ENCODE measurements at regions of chr15 and their contacts with region 1.

Region 1: DNA sequence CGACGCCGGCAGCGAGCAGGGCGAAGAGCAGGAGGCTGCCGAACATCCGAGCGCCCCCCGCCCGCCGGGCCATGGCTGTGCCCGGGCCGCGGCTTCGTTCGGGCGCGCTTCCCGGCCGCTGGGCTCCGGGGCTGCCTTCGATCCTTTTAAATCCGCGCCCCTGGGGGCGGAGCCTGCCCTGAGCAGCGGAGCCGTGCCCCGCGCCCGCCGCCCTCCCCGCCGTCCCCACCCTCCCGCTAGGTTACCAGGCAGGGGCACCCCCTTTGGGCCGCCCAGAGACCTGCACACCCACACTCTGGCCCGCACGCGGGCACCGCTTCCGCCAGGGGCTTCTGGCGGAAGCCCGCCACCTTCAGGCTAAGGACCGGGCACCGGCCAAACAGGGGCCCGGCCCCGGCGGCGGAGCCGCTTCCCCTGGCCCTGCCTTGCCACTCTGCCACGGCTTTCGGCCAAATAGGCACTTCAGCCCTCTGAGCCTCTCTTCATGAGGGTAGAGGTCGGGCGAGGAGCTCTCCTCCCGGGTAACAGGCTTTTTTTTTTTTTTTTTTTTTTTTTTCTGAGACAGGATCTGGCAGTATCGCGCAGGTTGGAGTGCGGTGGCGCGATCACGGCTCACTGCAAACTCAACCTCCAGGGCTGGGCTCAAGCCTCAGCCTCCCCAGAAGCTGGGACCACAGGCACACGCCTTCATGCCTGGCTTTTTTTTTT is at the start of gene NMB:
- DNase-seq: peak; percentile 76 to 88 (median 87)
- ATAC-seq: peak; percentile 82
- H3K4me3 ChIP-seq: peak within 1 kb of the TSS; percentile 73
- H3K4me3 Mint-ChIP-seq: peak within 1 kb of the TSS; percentile 78 to 86 (median 83)
- H3K27ac ChIP-seq: peak within 1 kb of the TSS; percentile 76
- H3K27ac Mint-ChIP-seq: peak within 1 kb of the TSS; percentile 74 to 93 (median 84)
- H3K4me1 ChIP-seq: peaks cover 13 to 27% of the 10 kb centered on the region in 2 donors
- H3K4me1 Mint-ChIP-seq: peaks cover 13 to 47% (median 39%) of the 10 kb centered on the region in 7 donors
- H3K27me3 ChIP-seq: no peaks in the 10 kb centered on the region
- H3K27me3 Mint-ChIP-seq: no peaks in the 10 kb centered on the region
- total RNA-seq, gene NMB: 1.2 to 3.1 (median 2.9) TPM

Region 2: DNA sequence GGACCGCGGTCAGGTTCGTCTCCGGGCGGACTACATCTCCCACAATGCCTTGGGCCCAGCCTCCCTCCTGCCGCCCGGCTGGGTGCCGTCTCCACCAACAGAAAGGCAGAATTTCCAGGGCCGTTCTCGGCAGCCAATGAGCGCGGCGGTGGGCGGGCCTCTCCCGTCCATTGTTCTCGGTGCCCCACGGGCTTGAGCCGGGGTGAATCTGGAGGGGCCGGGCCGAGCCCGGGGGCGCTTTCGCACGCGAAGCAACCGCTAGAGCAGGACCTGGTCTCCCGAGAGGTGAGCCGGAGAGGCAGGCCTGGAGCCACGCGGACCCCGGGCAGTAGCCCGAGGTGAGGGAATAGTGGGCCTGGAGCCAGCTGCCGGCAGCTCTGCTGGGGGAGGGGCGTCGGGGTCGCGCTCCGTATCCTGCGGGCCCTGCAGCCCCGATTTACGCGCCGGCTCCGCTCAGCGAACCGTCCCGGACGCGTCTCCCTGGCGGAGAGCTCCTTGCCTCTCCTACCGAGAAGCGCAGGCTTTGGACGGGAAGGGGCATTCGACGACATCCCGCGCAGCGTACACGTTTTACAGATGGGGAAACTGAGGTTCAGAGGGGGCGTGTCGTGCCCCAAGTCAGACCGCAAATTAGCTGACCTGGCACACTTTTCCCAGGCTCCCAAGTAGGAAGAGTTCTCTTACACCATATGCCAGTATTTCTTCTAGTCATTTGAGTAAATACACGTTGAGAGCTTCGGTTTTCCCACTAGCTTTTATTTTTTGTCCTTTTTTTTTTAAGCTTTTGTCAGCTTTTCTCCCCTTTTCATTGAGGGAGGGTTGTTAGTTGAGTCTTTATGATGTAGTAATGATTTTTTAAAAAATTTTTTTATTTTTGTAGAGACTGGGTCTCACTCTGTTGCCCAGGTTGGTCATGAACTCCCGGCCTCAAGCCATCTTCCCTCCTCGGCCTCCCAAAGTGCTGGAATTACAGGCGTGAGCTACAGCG is 57.1 kb before region 1 on chr15 and contains the start of gene ZSCAN2:
- CTCF ChIA-PET with region 1: interaction called, 7 read pairs
- POLR2A ChIA-PET with region 1: interaction called, 32 read pairs
- intact Hi-C with region 1: loop called (anchors 1 kb)
- DNase-seq: peak; percentile 83 to 93 (median 90)
- ATAC-seq: peak; percentile 98
- H3K4me3 ChIP-seq: peak within 1 kb of the TSS; percentile 96
- H3K4me3 Mint-ChIP-seq: peak within 1 kb of the TSS; percentile 89 to 99 (median 96)
- H3K27ac ChIP-seq: peak within 1 kb of the TSS; percentile 77
- H3K27ac Mint-ChIP-seq: peak within 1 kb of the TSS; percentile 67 to 97 (median 88)
- H3K4me1 ChIP-seq: peaks cover 29 to 36% of the 10 kb centered on the region in 2 donors
- H3K4me1 Mint-ChIP-seq: peaks cover 53 to 89% (median 71%) of the 10 kb centered on the region in 7 donors
- H3K27me3 ChIP-seq: no peaks in the 10 kb centered on the region
- H3K27me3 Mint-ChIP-seq: no peaks in the 10 kb centered on the region
- total RNA-seq, gene ZSCAN2: 4.8 to 13.0 (median 6.8) TPM

Region 3: GRCh38 chr15:84633311-84634227 is 24.7 kb before region 1 on chr15:
- CTCF ChIA-PET with region 1: interaction called, 8 read pairs
- POLR2A ChIA-PET with region 1: interaction called, 41 read pairs
- intact Hi-C with region 1: loop called (anchors 1 kb)
- DNase-seq: peak; percentile 48 to 77 (median 66)
- ATAC-seq: peak; percentile 67
- H3K4me3 ChIP-seq: peak overlapping the region; percentile 96
- H3K4me3 Mint-ChIP-seq: peak overlapping the region; percentile 84 to 99 (median 98)
- H3K27ac ChIP-seq: peak overlapping the region; percentile 78
- H3K27ac Mint-ChIP-seq: peak overlapping the region; percentile 79 to 98 (median 93)
- H3K4me1 ChIP-seq: peaks cover 26 to 40% of the 10 kb centered on the region in 2 donors
- H3K4me1 Mint-ChIP-seq: peaks cover 23 to 58% (median 53%) of the 10 kb centered on the region in 7 donors
- H3K27me3 ChIP-seq: no peaks in the 10 kb centered on the region
- H3K27me3 Mint-ChIP-seq: no peaks in the 10 kb centered on the region

Region 4: DNA sequence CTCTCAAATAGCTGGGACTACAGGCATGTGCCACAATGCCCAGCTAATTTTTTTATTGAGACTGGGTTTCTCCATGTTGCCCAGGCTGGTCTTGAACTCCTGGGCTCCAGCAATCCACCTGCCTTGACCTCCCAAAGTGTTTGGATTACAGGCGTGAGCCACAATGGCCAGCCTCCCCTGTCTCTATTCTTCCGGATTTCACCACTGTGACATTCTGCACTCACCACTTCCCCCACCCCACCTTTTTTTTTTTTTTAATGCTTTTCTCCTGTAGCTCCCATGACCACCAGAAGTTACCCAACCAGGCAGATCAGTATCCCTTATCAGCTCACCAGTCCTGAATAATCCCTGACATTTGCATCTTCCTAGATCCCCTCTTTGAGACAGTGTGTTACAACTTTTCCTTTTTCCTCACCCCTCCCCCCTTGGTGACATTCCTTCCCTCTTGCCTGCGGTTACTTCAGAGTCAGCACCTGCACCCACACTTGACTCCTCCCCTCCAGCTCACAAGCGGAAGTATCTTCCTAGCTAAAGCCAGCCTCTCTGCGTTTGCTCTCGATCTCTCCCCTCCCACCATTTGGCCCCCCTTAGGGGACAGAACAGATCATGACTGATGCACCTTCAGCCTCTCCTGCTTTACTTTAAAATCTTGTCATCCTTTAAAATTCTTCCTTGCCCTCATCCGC is 76.7 kb after region 1 on chr15:
- CTCF ChIA-PET with region 1: interaction called, 8 read pairs
- POLR2A ChIA-PET with region 1: interaction called, 12 read pairs
- intact Hi-C with region 1: loop called (anchors 1 kb)
- DNase-seq: peak in 8 of 9 donors; percentile 69 to 83 (median 78)
- ATAC-seq: peak; percentile 85
- H3K4me3 ChIP-seq: peak overlapping the region; percentile 56
- H3K4me3 Mint-ChIP-seq: peak overlapping the region; percentile 71 to 89 (median 84)
- H3K27ac ChIP-seq: peak overlapping the region; percentile 67
- H3K27ac Mint-ChIP-seq: peak overlapping the region; percentile 89 to 96 (median 93)
- H3K4me1 ChIP-seq: peaks cover 34 to 47% of the 10 kb centered on the region in 2 donors
- H3K4me1 Mint-ChIP-seq: peaks cover 36 to 62% (median 50%) of the 10 kb centered on the region in 7 donors
- H3K27me3 ChIP-seq: no peaks in the 10 kb centered on the region
- H3K27me3 Mint-ChIP-seq: no peaks in the 10 kb centered on the region

Region 5: GRCh38 chr15:84818261-84819131 is 160.3 kb after region 1 on chr15:
- CTCF ChIA-PET with region 1: interaction called, 7 read pairs
- POLR2A ChIA-PET with region 1: interaction called, 4 read pairs
- intact Hi-C with region 1: loop called in 1 of 2 experiments (anchors 1 kb)
- DNase-seq: peak in 5 of 9 donors; percentile 6 to 48 (median 25)
- ATAC-seq: peak; percentile 6
- H3K4me3 ChIP-seq: no peak overlapping the region
- H3K4me3 Mint-ChIP-seq: peak overlapping the region in 6 of 10 donors; percentile 28 to 70 (median 52)
- H3K27ac ChIP-seq: no peak overlapping the region
- H3K27ac Mint-ChIP-seq: peak overlapping the region in 6 of 9 donors; percentile 14 to 78 (median 57)
- H3K4me1 ChIP-seq: peaks cover 0 to 10% of the 10 kb centered on the region in 2 donors
- H3K4me1 Mint-ChIP-seq: peaks cover 6 to 20% (median 10%) of the 10 kb centered on the region in 7 donors
- H3K27me3 ChIP-seq: no peaks in the 10 kb centered on the region
- H3K27me3 Mint-ChIP-seq: peaks cover 6 to 19% (median 11%) of the 10 kb centered on the region in 5 donors

Region 6: DNA sequence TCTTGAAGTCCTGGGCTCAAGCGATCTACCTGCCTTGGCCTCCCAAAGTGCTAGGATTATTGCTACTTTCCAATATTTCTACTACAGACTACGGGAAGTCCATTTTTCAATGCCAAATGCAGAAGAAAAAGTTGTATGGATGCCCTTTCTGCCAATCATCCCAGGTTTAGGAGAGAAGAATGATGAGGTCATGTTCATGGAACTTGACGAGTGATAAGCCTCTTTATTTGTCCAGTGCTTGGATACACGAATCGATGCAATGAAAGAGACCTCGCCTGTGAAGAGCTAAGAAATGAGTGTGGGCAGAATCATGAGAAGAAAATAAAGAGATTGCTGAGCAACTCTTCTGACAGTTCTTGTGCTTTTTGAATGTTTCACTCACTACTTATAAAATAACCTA is 225.2 kb after region 1 on chr15:
- CTCF ChIA-PET with region 1: interaction called, 6 read pairs
- POLR2A ChIA-PET with region 1: no interaction called
- intact Hi-C with region 1: loop called (anchors 1 kb)
- DNase-seq: no peak
- ATAC-seq: no peak
- H3K4me3 ChIP-seq: no peak overlapping the region
- H3K4me3 Mint-ChIP-seq: no peak overlapping the region
- H3K27ac ChIP-seq: no peak overlapping the region
- H3K27ac Mint-ChIP-seq: no peak overlapping the region
- H3K4me1 ChIP-seq: no peaks in the 10 kb centered on the region
- H3K4me1 Mint-ChIP-seq: no peaks in the 10 kb centered on the region
- H3K27me3 ChIP-seq: no peaks in the 10 kb centered on the region
- H3K27me3 Mint-ChIP-seq: peaks cover 0 to 10% (median 0%) of the 10 kb centered on the region in 5 donors

Measured in naive thymus-derived CD4-positive, alpha-beta T cell (primary cell).